Activated CD8-positive, alpha-beta T cell treated with anti-CD3 and anti-CD28 coated beads, Interleukin-2, amount 10 ng/mL, durations not matched to agents 7 days and 5 days (primary cell): ENCODE measurements at regions of chr1 and their contacts with region 1.

Region 1: DNA sequence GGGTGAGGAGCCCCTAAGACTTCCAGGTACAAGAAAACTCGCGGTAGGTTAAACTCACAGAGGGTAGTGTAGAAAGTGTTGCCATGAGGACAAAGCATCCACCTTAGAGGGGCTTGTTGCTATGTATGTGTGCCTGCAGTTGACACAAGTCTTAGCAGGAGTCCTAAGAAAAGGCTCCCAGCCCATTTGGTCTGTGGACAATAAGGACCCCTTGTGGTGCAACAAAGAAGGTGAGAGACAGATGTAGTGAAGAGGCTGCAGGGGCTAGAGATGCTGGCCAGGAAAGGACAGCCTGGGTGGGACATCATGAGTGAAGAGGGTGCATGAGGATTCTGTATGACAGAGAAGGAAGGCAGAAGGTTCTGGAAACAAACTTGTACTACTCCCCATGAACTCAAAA is 36.3 kb upstream of the IL10 start:
- DNase-seq: peak; percentile 73
- ATAC-seq: peak; percentile 86
- H3K4me3 Mint-ChIP-seq: no peak overlapping the region
- H3K27ac Mint-ChIP-seq: peak overlapping the region; percentile 7
- H3K4me1 Mint-ChIP-seq: peaks cover 49% of the 10 kb centered on the region
- H3K27me3 Mint-ChIP-seq: no peaks in the 10 kb centered on the region

Region 2: DNA sequence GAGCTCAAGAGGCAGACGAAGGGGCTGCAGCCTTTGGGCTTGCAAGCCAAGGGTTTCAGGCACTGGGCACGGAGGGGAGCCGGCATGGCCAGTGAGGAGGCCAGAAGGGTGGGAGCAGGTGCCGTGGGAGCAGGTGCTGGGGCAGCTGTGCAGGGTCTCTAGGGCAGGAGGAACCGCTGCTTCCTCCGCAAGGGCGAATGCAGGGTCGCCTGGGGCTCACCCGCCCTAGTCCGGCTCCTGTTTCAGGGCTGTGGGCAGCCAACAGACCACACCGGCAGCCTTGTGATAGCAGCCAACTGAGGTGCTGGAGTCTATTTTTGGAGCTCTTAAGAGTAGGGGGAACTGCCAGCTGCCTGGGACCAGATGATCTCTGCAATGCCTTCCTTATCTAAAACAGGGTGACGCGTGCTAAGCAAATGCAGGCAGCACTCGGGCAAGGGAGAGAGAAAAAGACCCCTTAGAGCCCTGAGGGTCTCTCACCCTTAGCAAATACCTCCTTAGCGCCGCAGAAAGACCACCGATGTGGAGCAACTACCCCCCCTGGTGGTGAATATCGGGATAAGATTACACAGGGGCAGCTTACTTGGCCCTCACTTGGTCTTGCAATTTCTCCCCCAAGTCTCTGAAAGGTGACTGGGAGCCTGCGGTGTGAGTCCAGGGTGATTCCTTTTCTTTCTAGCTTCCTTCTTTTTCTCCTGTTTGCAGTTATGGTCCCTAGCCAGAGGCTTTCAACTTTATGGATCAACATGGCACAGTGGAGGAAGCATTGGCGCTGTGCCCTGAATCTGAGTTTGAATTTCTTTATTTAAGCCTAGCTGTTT is 144.6 kb before region 1 on chr1:
- CTCF ChIA-PET with region 1: interaction called, 13 read pairs
- POLR2A ChIA-PET with region 1: no interaction called
- DNase-seq: peak; percentile 84
- ATAC-seq: peak; percentile 92
- H3K4me3 Mint-ChIP-seq: no peak overlapping the region
- H3K27ac Mint-ChIP-seq: no peak overlapping the region
- H3K4me1 Mint-ChIP-seq: peaks cover 22% of the 10 kb centered on the region
- H3K27me3 Mint-ChIP-seq: peaks cover 37% of the 10 kb centered on the region

Region 3: DNA sequence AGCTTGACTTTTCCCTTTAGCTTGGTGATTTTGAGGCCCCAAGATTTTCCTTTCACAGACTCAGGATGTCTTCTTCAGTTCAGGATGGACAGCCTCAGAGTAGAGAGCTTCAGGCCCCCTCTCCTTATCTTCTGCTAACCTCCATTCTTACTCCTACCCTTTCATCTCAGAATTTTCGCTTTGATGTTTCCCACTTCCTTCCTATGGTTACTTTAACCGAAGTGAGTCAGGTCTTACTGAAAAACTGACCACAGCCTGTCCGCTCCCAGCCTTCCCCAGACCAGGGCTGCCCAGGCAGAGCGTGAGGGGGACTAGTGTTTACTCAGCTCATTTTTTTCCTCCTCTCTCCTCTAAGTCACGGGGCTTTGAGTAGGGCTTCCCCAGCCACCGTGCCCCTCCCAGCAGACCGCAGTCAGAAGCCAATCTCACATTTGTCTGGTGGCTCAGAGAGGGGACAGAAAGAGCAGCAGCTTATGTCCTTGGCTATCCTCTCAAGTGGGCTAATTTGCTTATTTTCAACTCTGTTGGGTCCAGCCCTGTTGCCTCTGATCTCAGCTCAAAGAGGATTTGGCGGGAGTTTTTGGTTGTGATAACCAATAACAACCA is 42.3 kb before region 1 on chr1:
- CTCF ChIA-PET with region 1: interaction called, 53 read pairs
- POLR2A ChIA-PET with region 1: interaction called, 3 read pairs
- DNase-seq: peak; percentile 85
- ATAC-seq: peak; percentile 80
- H3K4me3 Mint-ChIP-seq: peak overlapping the region; percentile 61
- H3K27ac Mint-ChIP-seq: peak overlapping the region; percentile 68
- H3K4me1 Mint-ChIP-seq: peaks cover 70% of the 10 kb centered on the region
- H3K27me3 Mint-ChIP-seq: peaks cover 19% of the 10 kb centered on the region

Region 4: GRCh38 chr1:206834711-206835110 is 26.1 kb after region 1 on chr1:
- CTCF ChIA-PET with region 1: interaction called, 118 read pairs
- POLR2A ChIA-PET with region 1: no interaction called
- DNase-seq: no peak
- ATAC-seq: no peak
- H3K4me3 Mint-ChIP-seq: no peak overlapping the region
- H3K27ac Mint-ChIP-seq: no peak overlapping the region
- H3K4me1 Mint-ChIP-seq: peaks cover 48% of the 10 kb centered on the region
- H3K27me3 Mint-ChIP-seq: peaks cover 25% of the 10 kb centered on the region

Region 5: GRCh38 chr1:206865013-206865671 is 56.5 kb after region 1 on chr1 and contains the start of gene IL20:
- CTCF ChIA-PET with region 1: interaction called, 22 read pairs
- POLR2A ChIA-PET with region 1: no interaction called
- DNase-seq: peak; percentile 85
- ATAC-seq: peak; percentile 82
- H3K4me3 Mint-ChIP-seq: no peak within 1 kb of the TSS
- H3K27ac Mint-ChIP-seq: no peak within 1 kb of the TSS
- H3K4me1 Mint-ChIP-seq: peaks cover 6% of the 10 kb centered on the region
- H3K27me3 Mint-ChIP-seq: peaks cover 42% of the 10 kb centered on the region
- total RNA-seq, gene IL20: not detected

Region 6: DNA sequence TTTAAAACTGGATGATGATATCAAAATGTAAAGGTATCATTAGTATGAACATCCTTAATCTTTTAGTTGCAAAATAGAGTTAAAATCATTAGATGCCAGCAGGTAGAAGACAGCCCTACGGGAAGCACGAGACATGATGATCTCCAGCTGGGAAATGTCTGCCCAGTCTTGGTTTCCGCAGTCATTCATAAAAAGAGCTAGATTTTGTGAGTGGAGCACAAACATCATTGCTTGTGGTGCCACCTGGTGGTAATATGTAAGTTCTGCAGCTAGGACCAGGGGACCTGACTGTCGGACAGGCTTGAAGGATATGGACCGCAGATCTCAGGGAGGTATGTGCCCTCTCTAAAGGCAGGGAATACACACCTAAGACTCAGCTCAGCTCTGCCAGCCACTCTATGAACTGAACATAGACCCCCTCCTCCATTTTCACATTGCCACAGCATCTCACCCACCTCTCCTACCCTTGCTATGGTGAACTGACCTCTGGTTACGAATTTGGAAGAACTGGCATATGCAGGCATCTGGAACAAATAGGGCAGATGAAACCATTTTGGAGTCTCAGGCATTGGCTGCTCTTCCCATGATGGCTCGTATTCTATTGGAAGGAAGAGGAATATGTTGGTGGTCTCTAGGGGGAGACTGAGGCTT is 104.0 kb after region 1 on chr1:
- CTCF ChIA-PET with region 1: interaction called, 185 read pairs
- POLR2A ChIA-PET with region 1: interaction called, 5 read pairs
- DNase-seq: peak; percentile 80
- ATAC-seq: peak; percentile 64
- H3K4me3 Mint-ChIP-seq: no peak overlapping the region
- H3K27ac Mint-ChIP-seq: no peak overlapping the region
- H3K4me1 Mint-ChIP-seq: peaks cover 65% of the 10 kb centered on the region
- H3K27me3 Mint-ChIP-seq: no peaks in the 10 kb centered on the region

Region 7: GRCh38 chr1:206982216-206982615 is 173.6 kb after region 1 on chr1:
- CTCF ChIA-PET with region 1: interaction called, 76 read pairs
- POLR2A ChIA-PET with region 1: no interaction called
- DNase-seq: peak; percentile 75
- ATAC-seq: peak; percentile 82
- H3K4me3 Mint-ChIP-seq: no peak overlapping the region
- H3K27ac Mint-ChIP-seq: no peak overlapping the region
- H3K4me1 Mint-ChIP-seq: no peaks in the 10 kb centered on the region
- H3K27me3 Mint-ChIP-seq: peaks cover 32% of the 10 kb centered on the region